ENCODE measurements at regions of chr2 and their contacts with region 1.

Region 1: DNA sequence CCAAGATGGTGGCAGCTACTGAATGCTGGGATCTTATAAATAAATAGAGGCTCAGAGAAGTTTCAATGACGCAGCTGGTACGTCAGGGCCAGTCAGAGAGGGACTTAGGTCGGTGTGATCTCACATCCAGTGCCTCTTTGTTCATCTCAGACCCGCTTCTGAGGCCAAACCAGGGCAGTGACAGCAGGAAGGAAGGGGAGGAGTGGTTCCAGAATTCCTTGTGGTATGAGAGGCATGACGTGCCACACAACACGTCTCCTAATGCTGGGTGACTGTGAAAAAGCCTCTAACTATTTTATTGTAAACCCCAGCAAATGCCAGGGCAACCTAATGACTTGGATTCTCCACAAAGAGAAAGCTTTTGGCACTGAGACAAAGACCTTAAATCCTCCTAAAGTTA is 423.3 kb downstream of the LPIN1 start:
- DNase-seq: peak in 3 of 10 donors; percentile 12 to 32 (median 25)
- H3K4me3 ChIP-seq: no peak overlapping the region
- H3K27ac ChIP-seq: peak overlapping the region in 49 of 59 donors; percentile 4 to 87 (median 68)
- H3K27me3 ChIP-seq: peaks cover 0 to 4% (median 0%) of the 10 kb centered on the region in 45 donors
- CTCF ChIP-seq: no peak

Region 2: GRCh38 chr2:11710234-11710975 is 459.3 kb before region 1 on chr2:
- intact Hi-C with region 1: no loop called
- DNase-seq: peak in 1 of 10 donors; percentile 19
- H3K4me3 ChIP-seq: no peak overlapping the region
- H3K27ac ChIP-seq: peak overlapping the region in 42 of 59 donors; percentile 1 to 73 (median 42)
- H3K27me3 ChIP-seq: no peaks in the 10 kb centered on the region
- CTCF ChIP-seq: no peak

Region 3: GRCh38 chr2:11863513-11864328 is 306.0 kb before region 1 on chr2:
- intact Hi-C with region 1: loop called in 1 of 2 experiments (anchors 5 kb)
- DNase-seq: peak; percentile 37 to 88 (median 79)
- H3K4me3 ChIP-seq: peak overlapping the region in 16 of 59 donors; percentile 2 to 37 (median 16)
- H3K27ac ChIP-seq: peak overlapping the region in 13 of 59 donors; percentile 5 to 67 (median 33)
- H3K27me3 ChIP-seq: no peaks in the 10 kb centered on the region
- CTCF ChIP-seq: peak; percentile 82 to 98 (median 96)

Region 4: DNA sequence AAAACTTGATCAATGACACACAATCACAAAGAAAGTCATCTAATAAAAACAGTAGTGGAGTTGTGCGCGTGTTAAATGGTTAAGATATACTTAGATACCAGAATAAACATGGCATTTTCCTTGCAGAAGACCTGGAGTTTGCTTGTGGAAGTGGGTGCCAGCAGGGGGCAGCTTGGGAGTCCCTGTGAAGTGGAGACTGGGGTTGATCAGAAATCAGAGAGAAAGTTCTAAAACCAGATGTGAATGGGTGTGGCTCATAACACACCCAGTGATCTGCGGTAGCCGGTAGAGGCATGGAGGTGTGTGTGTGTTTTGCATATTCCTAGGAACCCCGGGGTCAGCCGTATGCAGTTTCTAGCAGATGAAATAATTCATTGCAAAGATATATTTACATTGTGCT is 246.9 kb after region 1 on chr2:
- intact Hi-C with region 1: loop called in 1 of 2 experiments (anchors 10 kb)
- DNase-seq: no peak
- H3K4me3 ChIP-seq: no peak overlapping the region
- H3K27ac ChIP-seq: no peak overlapping the region
- H3K27me3 ChIP-seq: no peaks in the 10 kb centered on the region
- CTCF ChIP-seq: peak in 49 of 56 donors; percentile 16 to 56 (median 38)

Measured in dorsolateral prefrontal cortex (tissue), 120 donors.